ENCODE measurements at regions of chr11 and their contacts with region 1.

Region 1: GRCh38 chr11:37449146-37449545 is 851.1 kb upstream of the RAG2 start:
- DNase-seq: peak; percentile 66
- H3K4me3 ChIP-seq: no peak overlapping the region
- H3K27ac ChIP-seq: no peak overlapping the region
- H3K4me1 ChIP-seq: peaks cover 14% of the 10 kb centered on the region
- H3K27me3 ChIP-seq: no peaks in the 10 kb centered on the region
- CTCF ChIP-seq: peak; percentile 53 to 66

Region 2: DNA sequence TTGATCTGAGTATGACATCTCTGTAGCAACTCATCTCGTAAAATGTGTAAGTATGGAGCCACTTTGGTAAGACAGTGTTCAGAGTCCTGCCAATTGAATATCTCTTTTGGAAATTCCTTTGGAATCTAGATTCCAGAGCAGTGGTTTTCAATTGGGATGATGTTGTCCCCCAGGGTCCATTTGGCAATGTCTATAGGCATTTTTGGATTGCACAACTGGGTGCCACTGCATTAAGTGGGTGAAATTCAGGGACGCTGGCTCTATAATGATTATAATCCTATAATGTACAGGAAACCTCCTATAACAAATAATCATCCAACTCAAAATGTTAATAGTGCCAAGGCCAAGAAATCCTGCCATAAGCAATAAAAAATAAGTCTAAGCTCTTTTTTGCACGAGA is 446.3 kb before region 1 on chr11:
- CTCF ChIA-PET with region 1: no interaction called
- dilution Hi-C with region 1: no loop called
- in situ Hi-C with region 1: no loop called
- intact Hi-C with region 1: loop called (anchors 2 kb)
- DNase-seq: no peak
- H3K4me3 ChIP-seq: no peak overlapping the region
- H3K27ac ChIP-seq: no peak overlapping the region
- H3K4me1 ChIP-seq: no peaks in the 10 kb centered on the region
- H3K27me3 ChIP-seq: no peaks in the 10 kb centered on the region
- CTCF ChIP-seq: no peak

Region 3: DNA sequence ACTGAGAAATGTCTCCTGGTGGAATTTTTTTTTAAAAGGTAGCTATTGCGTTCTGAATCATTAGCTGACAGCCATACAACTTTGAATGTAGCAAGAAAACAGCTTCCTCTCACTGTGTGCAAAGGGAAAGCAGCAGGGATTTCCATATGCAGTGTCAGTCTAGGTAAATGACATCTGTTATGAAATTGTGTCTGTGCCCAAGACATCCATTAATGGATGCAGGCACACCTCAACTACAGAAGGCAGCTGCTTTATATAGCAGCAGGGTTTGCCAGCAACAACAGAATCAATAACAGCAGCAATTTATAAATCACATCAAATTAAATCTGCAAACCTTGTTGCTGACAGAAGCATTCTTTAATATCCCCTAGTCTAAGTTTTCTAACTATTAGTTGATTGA is 105.9 kb before region 1 on chr11:
- CTCF ChIA-PET with region 1: no interaction called
- dilution Hi-C with region 1: no loop called
- in situ Hi-C with region 1: no loop called
- intact Hi-C with region 1: no loop called
- DNase-seq: no peak
- H3K4me3 ChIP-seq: no peak overlapping the region
- H3K27ac ChIP-seq: no peak overlapping the region
- H3K4me1 ChIP-seq: no peaks in the 10 kb centered on the region
- H3K27me3 ChIP-seq: no peaks in the 10 kb centered on the region
- CTCF ChIP-seq: no peak

Region 4: DNA sequence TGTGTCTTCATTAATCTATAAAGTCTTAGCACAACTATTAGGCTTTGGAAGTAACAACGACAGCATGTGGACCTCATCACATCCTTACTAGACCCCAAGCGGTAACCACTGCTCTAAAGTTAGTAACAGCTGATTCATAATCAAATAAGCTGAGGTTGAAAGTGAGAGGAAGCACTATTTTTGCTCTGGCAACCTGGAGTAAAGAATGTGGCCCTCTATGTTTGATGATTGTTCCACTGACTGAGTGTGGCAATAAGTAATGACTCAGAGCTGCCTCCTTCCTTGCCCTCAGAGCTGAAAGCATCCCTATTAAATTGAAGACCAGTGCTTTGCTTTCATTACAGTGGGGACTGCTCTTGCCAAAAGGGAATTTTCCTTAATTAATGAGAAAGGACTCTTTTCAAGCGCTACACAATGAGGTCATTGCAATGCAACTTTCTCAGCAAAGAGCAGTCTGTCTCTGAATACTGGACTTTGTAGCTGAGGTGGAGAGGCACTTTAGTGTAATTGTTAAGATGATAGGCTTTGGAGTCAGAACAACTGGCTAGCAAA is 55.0 kb after region 1 on chr11:
- CTCF ChIA-PET with region 1: no interaction called
- dilution Hi-C with region 1: no loop called
- in situ Hi-C with region 1: loop called in 1 of 2 experiments (anchors 10 kb)
- intact Hi-C with region 1: loop called (anchors 2 kb)
- DNase-seq: peak; percentile 98
- H3K4me3 ChIP-seq: peak overlapping the region in 2 of 3 experiments; percentile 17 to 23
- H3K27ac ChIP-seq: peak overlapping the region; percentile 99
- H3K4me1 ChIP-seq: peaks cover 51% of the 10 kb centered on the region
- H3K27me3 ChIP-seq: no peaks in the 10 kb centered on the region
- CTCF ChIP-seq: no peak

Region 5: DNA sequence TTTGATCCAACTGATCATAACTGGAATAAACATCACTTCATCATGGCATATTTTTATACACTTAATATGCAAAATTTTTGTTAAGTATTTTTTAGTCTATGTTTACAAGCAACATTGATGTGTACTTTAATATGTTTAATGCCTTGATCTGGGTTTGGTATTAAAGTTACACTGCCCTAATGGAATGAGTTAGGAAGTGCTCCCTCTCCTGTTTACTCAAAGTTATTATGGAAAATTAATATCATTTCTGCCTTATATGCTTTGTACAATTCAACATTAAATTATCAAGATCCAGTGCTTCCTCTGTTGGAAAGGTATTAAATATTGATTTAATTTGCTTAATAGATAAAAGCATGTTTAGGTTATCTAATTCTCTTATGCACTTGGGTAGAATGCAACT is 76.2 kb after region 1 on chr11:
- CTCF ChIA-PET with region 1: no interaction called
- dilution Hi-C with region 1: no loop called
- in situ Hi-C with region 1: loop called in 1 of 2 experiments (anchors 5 kb)
- intact Hi-C with region 1: loop called (anchors 1 kb)
- DNase-seq: no peak
- H3K4me3 ChIP-seq: no peak overlapping the region
- H3K27ac ChIP-seq: no peak overlapping the region
- H3K4me1 ChIP-seq: no peaks in the 10 kb centered on the region
- H3K27me3 ChIP-seq: no peaks in the 10 kb centered on the region
- CTCF ChIP-seq: peak in 1 of 2 donors; percentile 50

Region 6: GRCh38 chr11:37630866-37631265 is 181.7 kb after region 1 on chr11:
- CTCF ChIA-PET with region 1: no interaction called
- dilution Hi-C with region 1: no loop called
- in situ Hi-C with region 1: no loop called
- intact Hi-C with region 1: loop called (anchors 10 kb)
- DNase-seq: no peak
- H3K4me3 ChIP-seq: no peak overlapping the region
- H3K27ac ChIP-seq: no peak overlapping the region
- H3K4me1 ChIP-seq: no peaks in the 10 kb centered on the region
- H3K27me3 ChIP-seq: no peaks in the 10 kb centered on the region
- CTCF ChIP-seq: no peak

Region 7: DNA sequence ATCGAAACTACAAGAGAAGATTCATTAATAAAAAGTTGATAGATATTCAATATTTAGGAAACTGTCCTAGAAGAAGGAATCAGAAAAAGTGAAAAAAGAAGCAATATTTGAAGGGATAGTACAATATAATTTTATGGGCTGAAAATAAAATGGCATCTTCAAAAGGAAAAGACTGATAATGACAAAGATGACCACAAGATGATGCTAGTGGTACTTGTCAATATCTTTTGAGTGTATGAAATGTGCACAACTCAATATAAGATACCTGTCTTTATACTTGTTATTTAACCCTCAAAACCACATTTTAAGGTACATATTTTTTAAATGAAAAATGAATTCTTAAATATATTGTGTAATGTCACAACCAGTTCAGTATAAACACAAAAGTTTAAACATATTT is 208.5 kb after region 1 on chr11:
- CTCF ChIA-PET with region 1: no interaction called
- dilution Hi-C with region 1: no loop called
- in situ Hi-C with region 1: no loop called
- intact Hi-C with region 1: loop called (anchors 5 kb)
- DNase-seq: peak; percentile 29
- H3K4me3 ChIP-seq: no peak overlapping the region
- H3K27ac ChIP-seq: no peak overlapping the region
- H3K4me1 ChIP-seq: no peaks in the 10 kb centered on the region
- H3K27me3 ChIP-seq: no peaks in the 10 kb centered on the region
- CTCF ChIP-seq: peak; percentile 74 to 82